ENCODE measurements at regions of chr11 and their contacts with region 1.

Region 1: DNA sequence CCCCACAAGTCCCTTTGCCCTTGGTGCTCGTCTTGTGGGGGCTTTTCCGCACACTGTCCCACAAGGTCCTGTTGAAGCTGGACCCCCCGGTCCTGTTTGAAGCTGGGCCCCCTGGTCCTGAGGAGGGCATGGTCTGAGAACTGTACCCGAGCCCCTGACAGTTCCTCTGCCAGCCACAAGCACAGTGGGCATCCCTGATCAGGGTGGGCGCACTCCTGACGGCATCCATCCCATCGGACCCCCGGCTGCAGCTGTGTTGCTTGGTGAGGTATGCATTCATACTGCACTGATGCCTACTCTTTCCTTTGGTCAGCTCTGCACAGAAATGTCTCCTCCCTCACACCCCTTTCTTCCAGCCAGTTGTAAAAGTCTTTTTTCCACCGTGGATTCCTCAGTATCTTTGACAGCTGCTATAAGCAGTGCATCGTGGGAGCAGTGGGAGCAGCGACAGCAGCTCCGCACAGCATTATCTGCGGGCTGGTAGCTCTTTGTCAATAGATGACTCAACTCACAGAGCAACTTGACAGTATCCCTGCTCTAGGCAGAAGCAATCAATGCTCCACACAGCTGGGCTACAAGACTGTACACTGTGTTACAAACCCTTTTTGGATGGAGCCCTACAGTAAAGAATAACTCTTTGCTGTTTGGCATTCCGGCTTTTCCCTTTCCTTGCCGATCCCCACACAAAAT is 1030.8 kb upstream of the CCDC90B start:
- DNase-seq: peak in 2 of 4 donors; percentile 13 to 22
- ATAC-seq: no peak
- H3K4me3 ChIP-seq: no peak overlapping the region
- H3K27ac ChIP-seq: no peak overlapping the region
- H3K4me1 ChIP-seq: no peaks in the 10 kb centered on the region
- H3K27me3 ChIP-seq: no peaks in the 10 kb centered on the region
- CTCF ChIP-seq: no peak
- POLR2A ChIP-seq: no peak

Region 2: DNA sequence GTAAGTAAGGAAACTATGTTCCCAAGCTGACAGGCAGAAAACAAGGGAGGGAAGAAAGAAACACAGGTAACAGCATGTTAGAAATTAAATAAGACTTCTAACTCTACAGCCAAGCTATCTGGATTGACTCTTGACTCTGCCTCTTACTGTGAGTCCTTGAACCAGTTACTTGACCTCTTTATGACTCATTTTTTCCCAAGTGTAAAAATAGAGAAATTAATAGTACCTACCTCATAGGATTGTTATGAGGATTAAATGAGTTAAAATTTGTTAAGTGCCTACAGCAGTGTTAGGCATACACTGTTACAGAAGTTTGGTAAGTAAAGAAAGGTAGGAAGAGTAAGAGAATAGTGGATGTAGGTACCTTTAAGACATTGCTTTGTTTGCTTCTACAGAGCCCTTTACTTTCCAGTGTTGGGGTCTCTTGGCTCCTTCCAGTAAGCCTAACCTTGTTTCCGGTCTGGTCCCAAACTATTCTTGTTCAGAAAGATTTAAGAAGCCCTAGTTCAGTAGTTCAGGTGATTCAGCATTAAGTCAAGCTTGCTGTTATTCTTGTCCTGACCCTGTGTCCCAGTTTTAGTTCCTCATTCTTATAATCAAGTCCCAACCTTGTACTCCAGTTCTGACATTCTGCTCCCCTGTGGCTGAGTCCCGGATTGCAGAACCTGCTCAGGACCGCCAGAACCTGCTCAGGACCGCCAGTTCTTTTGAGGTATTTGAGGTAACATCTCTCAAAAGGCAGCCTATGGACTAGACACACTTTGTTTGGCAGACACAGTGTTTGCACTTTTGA is 67.5 kb before region 1 on chr11:
- intact Hi-C with region 1: loop called (anchors 10 kb)
- DNase-seq: no peak
- ATAC-seq: no peak
- H3K4me3 ChIP-seq: no peak overlapping the region
- H3K27ac ChIP-seq: no peak overlapping the region
- H3K4me1 ChIP-seq: no peaks in the 10 kb centered on the region
- H3K27me3 ChIP-seq: no peaks in the 10 kb centered on the region
- CTCF ChIP-seq: no peak
- POLR2A ChIP-seq: no peak

Measured in body of pancreas (tissue), 4 donors.